Heart left ventricle (tissue), 16 donors: ENCODE measurements at regions of chr20 and their contacts with region 1.

Region 1: DNA sequence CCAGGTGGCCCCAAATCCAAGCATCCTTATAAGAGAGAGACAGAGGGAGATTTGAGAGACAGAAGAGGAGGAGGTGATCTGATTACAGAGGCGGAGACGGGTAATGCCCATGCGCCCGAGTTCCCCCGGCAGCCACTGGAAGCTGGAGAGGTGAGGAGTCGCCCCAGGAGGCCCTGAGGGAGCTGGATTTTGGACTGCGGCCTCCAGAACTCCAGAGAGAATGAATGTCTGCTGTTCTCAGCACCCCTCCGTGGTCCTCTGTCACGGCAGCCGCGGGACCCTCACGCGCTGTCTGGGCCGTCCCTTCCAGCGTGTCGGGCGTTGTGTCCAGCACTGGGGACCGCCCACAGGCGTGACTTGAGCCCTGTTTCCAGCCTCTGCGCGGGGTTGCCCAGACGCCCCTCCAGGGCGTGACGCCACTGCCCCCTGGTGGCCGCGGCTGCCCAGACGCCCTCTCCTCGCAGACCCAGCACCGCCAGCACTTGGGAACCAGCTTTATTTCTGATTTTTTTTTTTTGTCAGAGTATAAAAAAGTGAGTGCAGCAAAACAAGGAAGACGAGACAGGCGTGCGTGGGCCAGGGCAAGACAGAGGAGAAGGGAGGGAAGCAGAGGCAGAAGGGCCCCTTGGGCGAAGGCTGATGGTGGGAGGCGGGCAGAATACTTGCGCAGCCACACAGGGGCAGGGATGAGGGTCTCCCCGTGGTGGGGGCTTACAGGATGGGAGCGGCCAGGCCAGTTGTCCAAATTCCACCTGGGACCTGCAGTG is 4.1 kb upstream of the ZNF512B start:
- DNase-seq: peak; percentile 90 to 94 (median 90)
- ATAC-seq: peak; percentile 72 to 87 (median 82)
- H3K4me3 ChIP-seq: peak overlapping the region in 9 of 12 donors; percentile 23 to 46 (median 39)
- H3K27ac ChIP-seq: peak overlapping the region in 9 of 12 donors; percentile 1 to 72 (median 36)
- H3K4me1 ChIP-seq: peaks cover 0 to 43% (median 26%) of the 10 kb centered on the region in 12 donors
- H3K27me3 ChIP-seq: no peaks in the 10 kb centered on the region
- CTCF ChIP-seq: peak; percentile 98 to 100 (median 99)
- POLR2A ChIP-seq: no peak

Region 2: GRCh38 chr20:63495741-63496595 is 477.9 kb before region 1 on chr20:
- intact Hi-C with region 1: loop called in 1 of 10 experiments (anchors 5 kb)
- DNase-seq: peak; percentile 66 to 88 (median 76)
- ATAC-seq: peak; percentile 15 to 44 (median 32)
- H3K4me3 ChIP-seq: peak overlapping the region; percentile 15 to 92 (median 64)
- H3K27ac ChIP-seq: peak overlapping the region in 10 of 12 donors; percentile 37 to 100 (median 94)
- H3K4me1 ChIP-seq: peaks cover 2 to 56% (median 26%) of the 10 kb centered on the region in 12 donors
- H3K27me3 ChIP-seq: peaks cover 0 to 39% (median 18%) of the 10 kb centered on the region in 9 donors
- CTCF ChIP-seq: peak; percentile 89 to 98 (median 96)
- POLR2A ChIP-seq: no peak

Region 3: GRCh38 chr20:63612276-63612928 is 361.4 kb before region 1 on chr20:
- intact Hi-C with region 1: loop called in 1 of 10 experiments (anchors 10 kb)
- DNase-seq: peak in 2 of 5 donors; percentile 12 to 29
- ATAC-seq: peak in 3 of 4 donors; percentile 31 to 48 (median 36)
- H3K4me3 ChIP-seq: no peak overlapping the region
- H3K27ac ChIP-seq: peak overlapping the region in 1 of 12 donors; percentile 32
- H3K4me1 ChIP-seq: peaks cover 0 to 14% (median 0%) of the 10 kb centered on the region in 12 donors
- H3K27me3 ChIP-seq: no peaks in the 10 kb centered on the region
- CTCF ChIP-seq: no peak
- POLR2A ChIP-seq: no peak

Region 4: GRCh38 chr20:63775096-63775978 is 198.5 kb before region 1 on chr20:
- intact Hi-C with region 1: loop called in 6 of 10 experiments (anchors 10 kb)
- DNase-seq: peak in 2 of 5 donors; percentile 44 to 69
- ATAC-seq: peak in 1 of 4 donors; percentile 41
- H3K4me3 ChIP-seq: peak overlapping the region in 2 of 12 donors; percentile 12 to 24
- H3K27ac ChIP-seq: peak overlapping the region in 1 of 12 donors; percentile 24
- H3K4me1 ChIP-seq: peaks cover 0 to 38% (median 15%) of the 10 kb centered on the region in 12 donors
- H3K27me3 ChIP-seq: no peaks in the 10 kb centered on the region
- CTCF ChIP-seq: peak; percentile 55 to 80 (median 66)
- POLR2A ChIP-seq: no peak

Region 5: GRCh38 chr20:63846128-63846798 is 127.6 kb before region 1 on chr20:
- intact Hi-C with region 1: no loop called
- DNase-seq: peak; percentile 85 to 91 (median 90)
- ATAC-seq: peak; percentile 79 to 87 (median 84)
- H3K4me3 ChIP-seq: peak overlapping the region in 11 of 12 donors; percentile 3 to 50 (median 43)
- H3K27ac ChIP-seq: peak overlapping the region; percentile 71 to 96 (median 84)
- H3K4me1 ChIP-seq: peaks cover 0 to 53% (median 44%) of the 10 kb centered on the region in 12 donors
- H3K27me3 ChIP-seq: peaks cover 0 to 33% (median 0%) of the 10 kb centered on the region in 9 donors
- CTCF ChIP-seq: peak in 3 of 12 donors; percentile 7 to 37 (median 20)
- POLR2A ChIP-seq: no peak

Region 6: GRCh38 chr20:63882257-63883200 is 91.3 kb before region 1 on chr20:
- intact Hi-C with region 1: no loop called
- DNase-seq: no peak
- ATAC-seq: no peak
- H3K4me3 ChIP-seq: no peak overlapping the region
- H3K27ac ChIP-seq: no peak overlapping the region
- H3K4me1 ChIP-seq: peaks cover 0 to 26% (median 7%) of the 10 kb centered on the region in 12 donors
- H3K27me3 ChIP-seq: no peaks in the 10 kb centered on the region
- CTCF ChIP-seq: no peak
- POLR2A ChIP-seq: no peak

Region 7: GRCh38 chr20:63894358-63895201 is 79.2 kb before region 1 on chr20 and contains the start of gene DNAJC5:
- intact Hi-C with region 1: loop called in 2 of 10 experiments (anchors 5 kb)
- DNase-seq: peak; percentile 96 to 99 (median 97)
- ATAC-seq: peak; percentile 93 to 96 (median 95)
- H3K4me3 ChIP-seq: peak within 1 kb of the TSS; percentile 30 to 80 (median 68)
- H3K27ac ChIP-seq: peak within 1 kb of the TSS; percentile 42 to 96 (median 82)
- H3K4me1 ChIP-seq: peaks cover 9 to 50% (median 35%) of the 10 kb centered on the region in 12 donors
- H3K27me3 ChIP-seq: no peaks in the 10 kb centered on the region
- CTCF ChIP-seq: no peak
- POLR2A ChIP-seq: peak in 1 of 2 donors; percentile 52
- total RNA-seq, gene DNAJC5: 34.8 to 57.1 (median 46.1) TPM